Kidney (tissue), 22 donors: ENCODE measurements at regions of chr1 and their contacts with region 1.

Region 1: GRCh38 chr1:186605762-186606350 is 74.4 kb downstream of the PTGS2 start:
- DNase-seq: peak in 3 of 5 donors; percentile 24 to 50 (median 27)
- H3K4me3 ChIP-seq: no peak overlapping the region
- H3K27ac ChIP-seq: no peak overlapping the region
- H3K4me1 ChIP-seq: no peaks in the 10 kb centered on the region
- H3K27me3 ChIP-seq: no peaks in the 10 kb centered on the region
- CTCF ChIP-seq: peak; percentile 61

Region 2: GRCh38 chr1:186474208-186474607 is 131.6 kb before region 1 on chr1:
- intact Hi-C with region 1: no loop called
- DNase-seq: no peak
- H3K4me3 ChIP-seq: no peak overlapping the region
- H3K27ac ChIP-seq: no peak overlapping the region
- H3K4me1 ChIP-seq: no peaks in the 10 kb centered on the region
- H3K27me3 ChIP-seq: no peaks in the 10 kb centered on the region
- CTCF ChIP-seq: no peak

Region 3: GRCh38 chr1:186985889-186986491 is 380.1 kb after region 1 on chr1:
- intact Hi-C with region 1: loop called (anchors 10 kb)
- DNase-seq: peak in 2 of 5 donors; percentile 65 to 81
- H3K4me3 ChIP-seq: no peak overlapping the region
- H3K27ac ChIP-seq: no peak overlapping the region
- H3K4me1 ChIP-seq: no peaks in the 10 kb centered on the region
- H3K27me3 ChIP-seq: no peaks in the 10 kb centered on the region
- CTCF ChIP-seq: peak; percentile 67